K562 (cell line): ENCODE measurements at regions of chr20 and their contacts with region 1.

Region 1: DNA sequence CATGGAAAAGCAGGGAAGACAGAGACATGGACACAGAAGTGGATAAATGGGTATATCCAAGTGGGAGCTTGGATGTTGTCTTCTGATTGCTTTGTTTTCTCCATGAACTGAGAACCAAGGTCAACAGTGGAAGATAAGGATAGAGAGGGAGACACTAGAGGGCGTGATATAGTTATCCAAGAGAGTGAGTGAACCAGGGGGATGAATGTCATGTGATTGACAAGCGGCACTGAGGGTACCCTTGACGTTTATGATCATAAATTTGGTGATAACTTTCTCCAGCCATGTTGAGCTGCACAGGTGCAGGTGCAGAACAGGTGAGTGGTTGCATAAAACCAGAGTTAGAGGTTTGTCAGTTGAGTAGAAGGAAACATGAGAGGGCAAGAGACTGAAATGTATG is 20.7 kb downstream of the EBF4 start:
- DNase-seq: peak in 3 of 4 experiments; percentile 23 to 31 (median 24)
- ATAC-seq: peak; percentile 65; the same call in 1 of the 3 replicates
- H3K4me3 ChIP-seq: no peak overlapping the region
- H3K27ac ChIP-seq: no peak overlapping the region
- H3K4me1 ChIP-seq: no peaks in the 10 kb centered on the region
- H3K27me3 ChIP-seq: peaks cover 2 to 9% of the 10 kb centered on the region in 2 experiments; a peak in 2 of 5 replicates
- CTCF ChIP-seq: peak; percentile 37 to 56 (median 55); a peak in 5 of 6 replicates
- EP300 ChIP-seq: no peak
- POLR2A ChIP-seq: no peak
- RAD21 ChIP-seq: peak; percentile 17 to 68; a peak in 2 of 4 replicates

Region 2: GRCh38 chr20:2742934-2743559 is 29.8 kb after region 1 on chr20:
- CTCF ChIA-PET with region 1: interaction called, 5 read pairs
- POLR2A ChIA-PET with region 1: no interaction called
- in situ Hi-C with region 1: no loop called
- intact Hi-C with region 1: loop called (anchors 2 kb)
- DNase-seq: peak; percentile 65 to 70 (median 68)
- ATAC-seq: peak; percentile 93
- H3K4me3 ChIP-seq: no peak overlapping the region
- H3K27ac ChIP-seq: no peak overlapping the region
- H3K4me1 ChIP-seq: no peaks in the 10 kb centered on the region
- H3K27me3 ChIP-seq: peaks cover 3 to 48% of the 10 kb centered on the region in 2 experiments
- CTCF ChIP-seq: peak; percentile 74 to 84 (median 83)
- EP300 ChIP-seq: no peak
- POLR2A ChIP-seq: no peak
- RAD21 ChIP-seq: peak in 1 of 2 experiments; percentile 59; a peak in 2 of 4 replicates